ENCODE measurements at regions of chr9 and their contacts with region 1.

Region 1: DNA sequence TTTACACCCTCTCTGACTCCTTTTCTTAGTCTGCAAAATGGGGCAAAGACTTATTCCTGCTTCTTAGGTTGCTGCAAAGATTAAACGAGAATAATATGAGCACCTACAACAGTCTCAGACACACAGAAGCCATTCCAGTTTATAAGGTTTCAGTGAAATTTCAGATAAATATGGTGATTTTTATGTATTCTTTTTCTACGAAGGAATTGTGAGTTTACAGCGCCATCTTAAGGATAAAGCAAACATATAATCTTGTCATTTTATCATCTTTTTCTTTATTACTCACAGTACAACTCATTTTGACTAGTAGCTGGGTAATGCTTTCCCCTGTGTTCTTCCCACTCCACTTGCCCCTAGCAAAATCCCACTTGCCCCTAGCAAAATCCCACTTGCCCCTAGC is 29.2 kb upstream of the SMC5 start:
- DNase-seq: peak; percentile 68
- ATAC-seq: peak; percentile 88
- H3K4me3 ChIP-seq: no peak overlapping the region
- H3K27ac ChIP-seq: no peak overlapping the region
- H3K4me1 ChIP-seq: peaks cover 7% of the 10 kb centered on the region
- H3K27me3 ChIP-seq: no peaks in the 10 kb centered on the region
- CTCF ChIP-seq: peak; percentile 65
- POLR2A ChIP-seq: no peak
- RAD21 ChIP-seq: peak; percentile 80

Region 2: DNA sequence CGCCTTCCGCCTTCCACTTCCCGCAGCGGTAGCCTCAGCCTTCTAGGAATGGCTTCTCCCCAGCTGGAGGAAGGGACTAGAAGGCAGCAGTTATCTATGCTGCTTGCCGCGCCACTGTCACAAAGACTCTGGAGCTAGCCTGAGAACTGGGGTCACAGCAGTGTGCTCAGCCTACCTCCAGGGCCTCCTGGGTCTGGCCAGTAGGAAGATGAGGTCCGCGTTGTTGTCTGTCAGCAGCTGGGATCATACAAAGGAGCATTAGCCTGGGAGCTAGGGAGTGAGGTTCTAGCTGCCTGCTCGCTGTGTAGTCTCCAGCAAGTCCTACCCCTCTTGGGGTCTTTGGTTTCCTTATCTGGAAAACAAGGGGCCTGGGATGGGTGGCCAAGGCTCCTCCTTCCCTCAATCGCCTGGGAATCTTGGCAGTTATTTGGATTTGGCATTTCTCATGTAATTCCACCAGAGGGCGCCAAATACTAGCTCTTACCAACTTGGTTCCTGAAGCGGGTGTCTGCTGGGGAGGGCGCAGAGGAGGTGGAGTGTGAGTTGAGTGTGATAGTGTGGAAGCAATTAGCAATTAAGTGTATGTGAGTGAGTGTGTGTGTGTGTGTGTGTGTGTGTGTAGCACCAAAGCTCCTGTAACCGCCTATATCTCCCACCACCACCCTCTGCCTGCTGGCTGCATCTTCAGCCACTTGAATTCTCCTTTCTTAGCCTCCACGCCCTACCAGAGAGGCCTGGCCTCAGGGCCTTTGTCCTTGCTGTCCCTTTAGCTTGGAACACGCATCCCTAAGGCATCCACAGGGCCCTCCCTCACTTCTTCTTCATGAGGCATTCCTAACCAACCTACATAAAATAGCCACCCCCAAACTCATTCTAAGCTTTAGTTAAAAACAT is 807.4 kb before region 1 on chr9:
- CTCF ChIA-PET with region 1: no interaction called
- POLR2A ChIA-PET with region 1: no interaction called
- dilution Hi-C with region 1: no loop called
- in situ Hi-C with region 1: loop called (anchors 10 kb)
- intact Hi-C with region 1: loop called (anchors 5 kb)
- DNase-seq: peak; percentile 59
- ATAC-seq: peak; percentile 86
- H3K4me3 ChIP-seq: no peak overlapping the region
- H3K27ac ChIP-seq: no peak overlapping the region
- H3K4me1 ChIP-seq: no peaks in the 10 kb centered on the region
- H3K27me3 ChIP-seq: no peaks in the 10 kb centered on the region; the same call in 1 of the 2 replicates
- CTCF ChIP-seq: peak; percentile 87
- POLR2A ChIP-seq: 0 out of 2 replicates have a peak, but pooled peaks have one; percentile 31
- RAD21 ChIP-seq: peak; percentile 97

Region 3: GRCh38 chr9:69745716-69746437 is 483.7 kb before region 1 on chr9:
- CTCF ChIA-PET with region 1: no interaction called
- POLR2A ChIA-PET with region 1: no interaction called
- dilution Hi-C with region 1: no loop called
- in situ Hi-C with region 1: no loop called
- intact Hi-C with region 1: loop called (anchors 10 kb)
- DNase-seq: peak; percentile 47
- ATAC-seq: peak; percentile 57
- H3K4me3 ChIP-seq: no peak overlapping the region
- H3K27ac ChIP-seq: no peak overlapping the region
- H3K4me1 ChIP-seq: peaks cover 22% of the 10 kb centered on the region
- H3K27me3 ChIP-seq: no peaks in the 10 kb centered on the region
- CTCF ChIP-seq: peak; percentile 49
- POLR2A ChIP-seq: no peak
- RAD21 ChIP-seq: peak; percentile 60

Region 4: GRCh38 chr9:69971643-69972449 is 257.7 kb before region 1 on chr9:
- CTCF ChIA-PET with region 1: interaction called, 3 read pairs
- POLR2A ChIA-PET with region 1: no interaction called
- dilution Hi-C with region 1: no loop called
- in situ Hi-C with region 1: loop called (anchors 5 kb)
- intact Hi-C with region 1: loop called (anchors 1 kb)
- DNase-seq: peak; percentile 68
- ATAC-seq: peak; percentile 71
- H3K4me3 ChIP-seq: no peak overlapping the region
- H3K27ac ChIP-seq: no peak overlapping the region
- H3K4me1 ChIP-seq: peaks cover 9% of the 10 kb centered on the region
- H3K27me3 ChIP-seq: no peaks in the 10 kb centered on the region
- CTCF ChIP-seq: peak; percentile 90
- POLR2A ChIP-seq: peak; percentile 37; the same call in 1 of the 2 replicates
- RAD21 ChIP-seq: peak; percentile 88

Region 5: DNA sequence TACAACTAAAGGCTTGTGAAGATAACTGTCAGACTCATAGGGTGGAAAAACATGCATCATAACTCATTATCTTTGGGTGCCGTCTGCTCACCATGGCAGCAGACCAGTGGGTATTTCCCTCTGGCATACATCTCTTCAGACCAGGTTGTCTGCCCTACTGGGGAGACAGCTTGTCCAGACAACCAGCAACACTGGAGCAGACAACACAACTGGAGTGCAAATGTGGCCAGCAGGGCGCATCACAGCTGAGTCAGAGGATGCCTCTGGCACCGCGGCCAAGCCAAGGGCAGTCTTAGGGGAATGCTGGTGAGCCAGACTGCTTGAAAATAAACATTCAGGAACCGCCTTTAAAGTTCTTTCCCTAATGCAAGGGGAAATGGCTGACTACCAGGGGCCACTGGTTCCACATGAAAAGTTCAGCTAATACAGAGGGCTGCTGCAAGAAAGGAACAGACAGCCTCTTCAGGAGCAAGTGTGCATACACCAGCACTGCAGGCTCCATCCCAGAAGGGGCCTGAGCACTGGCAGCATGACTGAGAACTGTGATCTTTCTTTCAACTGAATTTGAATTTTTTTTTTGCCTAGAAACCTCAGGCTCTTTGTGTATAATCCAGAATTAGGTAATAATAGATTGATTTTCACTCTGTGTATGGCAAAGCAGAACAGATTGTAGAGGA is 108.6 kb before region 1 on chr9:
- CTCF ChIA-PET with region 1: interaction called, 6 read pairs
- POLR2A ChIA-PET with region 1: no interaction called
- dilution Hi-C with region 1: no loop called
- in situ Hi-C with region 1: loop called (anchors 10 kb)
- intact Hi-C with region 1: loop called (anchors 1 kb)
- DNase-seq: peak; percentile 97
- ATAC-seq: peak; percentile 95
- H3K4me3 ChIP-seq: no peak overlapping the region
- H3K27ac ChIP-seq: peak overlapping the region; percentile 54
- H3K4me1 ChIP-seq: peaks cover 15% of the 10 kb centered on the region
- H3K27me3 ChIP-seq: no peaks in the 10 kb centered on the region
- CTCF ChIP-seq: peak; percentile 47
- POLR2A ChIP-seq: no peak
- RAD21 ChIP-seq: peak; percentile 47

Region 6: DNA sequence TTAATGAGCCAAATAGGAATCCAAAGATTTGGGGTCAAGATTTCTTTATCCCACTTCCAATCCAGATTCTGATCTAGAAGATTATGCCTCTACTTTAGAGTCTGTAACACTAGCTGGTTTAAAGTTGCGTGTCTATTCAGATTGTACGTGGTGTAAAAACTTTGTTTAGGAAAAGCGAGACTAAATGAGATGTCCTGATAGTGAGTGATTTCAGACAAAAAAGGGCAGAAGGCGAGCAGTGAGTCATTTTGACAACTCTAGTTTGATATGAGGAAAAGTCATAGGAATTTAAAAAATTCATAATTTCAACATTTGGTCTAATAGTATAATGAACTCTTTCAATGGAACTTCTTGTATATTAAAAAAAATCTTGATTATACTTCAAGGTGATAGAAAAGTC is 304.5 kb after region 1 on chr9:
- CTCF ChIA-PET with region 1: no interaction called
- POLR2A ChIA-PET with region 1: no interaction called
- dilution Hi-C with region 1: no loop called
- in situ Hi-C with region 1: no loop called
- intact Hi-C with region 1: no loop called
- DNase-seq: peak; percentile 36
- ATAC-seq: peak; percentile 37; the same call in 1 of the 2 replicates
- H3K4me3 ChIP-seq: no peak overlapping the region
- H3K27ac ChIP-seq: no peak overlapping the region
- H3K4me1 ChIP-seq: peaks cover 8% of the 10 kb centered on the region
- H3K27me3 ChIP-seq: no peaks in the 10 kb centered on the region
- CTCF ChIP-seq: no peak
- POLR2A ChIP-seq: no peak
- RAD21 ChIP-seq: no peak